Mammary epithelial cell (primary cell): ENCODE measurements at regions of chr11 and their contacts with region 1.

Region 1: DNA sequence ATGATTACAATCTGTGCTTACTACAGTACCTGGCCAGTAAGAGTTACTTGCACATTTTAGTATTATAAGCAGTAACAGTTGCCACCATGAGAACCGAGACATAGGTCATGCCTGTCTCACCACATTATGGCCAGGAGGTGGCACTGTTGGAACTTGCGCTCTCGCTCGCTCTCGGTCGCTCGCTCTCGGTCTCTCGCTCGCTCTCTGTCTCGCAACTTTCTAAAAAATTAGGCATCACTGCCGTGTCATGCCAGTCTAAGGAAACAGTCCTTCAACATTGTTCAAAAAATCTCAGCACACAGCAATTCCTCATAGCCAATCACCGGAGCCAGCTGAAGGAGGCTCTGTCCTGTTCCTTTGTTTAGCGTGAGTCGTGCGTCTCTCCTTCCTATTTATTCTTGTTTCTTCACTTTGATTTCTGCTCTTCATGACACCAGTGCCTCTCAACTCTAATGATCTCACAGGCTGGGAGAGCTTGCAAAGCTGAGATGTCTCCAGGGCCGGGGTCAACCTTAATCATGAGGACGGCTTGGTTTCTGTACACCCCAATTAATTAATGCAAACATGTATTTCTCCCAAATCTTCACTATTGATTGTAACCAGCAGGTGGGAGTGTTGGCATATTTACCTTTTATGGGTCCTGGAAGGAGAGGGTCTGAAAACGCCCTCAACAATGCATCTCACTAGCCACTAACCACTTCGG is 6.3 kb upstream of the ADAMTS8 start:
- DNase-seq: peak; percentile 73
- H3K4me3 ChIP-seq: peak overlapping the region; percentile 67 to 69 (median 68)
- H3K27ac ChIP-seq: peak overlapping the region; percentile 72
- H3K4me1 ChIP-seq: peaks cover 27% of the 10 kb centered on the region
- H3K27me3 ChIP-seq: peaks cover 5% of the 10 kb centered on the region
- CTCF ChIP-seq: peak; percentile 89 to 91

Region 2: DNA sequence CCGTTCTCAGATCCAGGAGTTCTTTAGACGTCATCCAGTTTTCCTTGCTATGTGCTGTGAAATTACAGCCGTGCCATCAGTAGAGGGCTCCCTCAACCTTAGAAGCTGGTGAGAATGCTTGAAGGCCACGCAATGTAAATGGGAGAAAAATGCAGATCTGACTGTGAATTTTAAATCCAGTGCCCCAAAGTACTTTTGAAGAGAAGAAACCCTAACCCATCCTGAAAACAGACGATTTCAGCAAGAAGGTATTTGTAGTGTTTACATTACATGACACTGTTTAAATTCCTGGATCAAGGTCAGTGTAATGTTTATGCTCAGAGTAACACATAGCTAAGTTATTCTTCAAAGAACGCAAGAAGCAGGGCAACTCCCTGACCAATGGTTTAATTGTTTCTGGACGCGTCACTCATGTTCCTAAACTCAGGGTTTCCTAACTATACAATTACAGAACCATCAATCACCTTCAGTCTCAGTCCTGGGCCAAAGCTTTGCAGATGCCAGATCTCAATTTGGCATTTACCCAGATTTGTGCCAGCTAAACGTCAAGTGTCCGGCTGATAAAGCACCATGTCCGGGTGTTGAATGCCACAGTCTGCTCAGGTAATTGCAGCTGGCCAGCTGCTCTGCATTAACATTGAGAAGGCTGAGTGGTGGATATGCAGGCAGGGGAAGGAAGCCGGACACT is 44.5 kb before region 1 on chr11:
- CTCF ChIA-PET with region 1: no interaction called
- dilution Hi-C with region 1: no loop called
- in situ Hi-C with region 1: no loop called
- intact Hi-C with region 1: loop called (anchors 1 kb)
- DNase-seq: peak; percentile 48
- H3K4me3 ChIP-seq: no peak overlapping the region
- H3K27ac ChIP-seq: no peak overlapping the region
- H3K4me1 ChIP-seq: no peaks in the 10 kb centered on the region
- H3K27me3 ChIP-seq: peaks cover 6% of the 10 kb centered on the region
- CTCF ChIP-seq: peak; percentile 21 to 71

Region 3: DNA sequence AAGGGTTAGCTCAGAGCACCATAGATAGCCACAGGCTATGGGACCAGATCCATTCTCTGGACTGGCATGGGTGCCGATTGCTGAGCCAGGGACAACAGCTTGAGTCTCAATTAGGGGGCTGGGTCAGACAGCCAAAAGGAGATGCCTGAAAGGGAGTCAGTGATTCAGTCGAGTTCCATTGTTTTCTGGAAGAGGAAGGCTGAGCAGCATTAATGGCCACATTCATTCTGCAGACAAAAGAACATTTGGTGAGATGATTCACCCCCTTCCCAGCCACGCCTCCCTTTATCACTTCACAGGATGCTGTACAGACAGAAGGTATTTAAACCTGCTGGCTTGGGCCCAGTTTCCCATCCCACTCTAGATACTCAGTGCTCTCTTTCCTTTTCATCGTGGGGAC is 145.7 kb after region 1 on chr11:
- CTCF ChIA-PET with region 1: no interaction called
- dilution Hi-C with region 1: no loop called
- in situ Hi-C with region 1: no loop called
- intact Hi-C with region 1: loop called (anchors 2 kb)
- DNase-seq: peak; percentile 98
- H3K4me3 ChIP-seq: no peak overlapping the region
- H3K27ac ChIP-seq: peak overlapping the region; percentile 96
- H3K4me1 ChIP-seq: peaks cover 38% of the 10 kb centered on the region
- H3K27me3 ChIP-seq: no peaks in the 10 kb centered on the region
- CTCF ChIP-seq: no peak

Region 4: GRCh38 chr11:130677486-130678153 is 242.9 kb after region 1 on chr11:
- CTCF ChIA-PET with region 1: no interaction called
- dilution Hi-C with region 1: no loop called
- in situ Hi-C with region 1: no loop called
- intact Hi-C with region 1: loop called (anchors 5 kb)
- DNase-seq: peak; percentile 83
- H3K4me3 ChIP-seq: peak overlapping the region in 1 of 3 experiments; percentile 9
- H3K27ac ChIP-seq: peak overlapping the region; percentile 75
- H3K4me1 ChIP-seq: peaks cover 29% of the 10 kb centered on the region
- H3K27me3 ChIP-seq: no peaks in the 10 kb centered on the region
- CTCF ChIP-seq: no peak

Region 5: DNA sequence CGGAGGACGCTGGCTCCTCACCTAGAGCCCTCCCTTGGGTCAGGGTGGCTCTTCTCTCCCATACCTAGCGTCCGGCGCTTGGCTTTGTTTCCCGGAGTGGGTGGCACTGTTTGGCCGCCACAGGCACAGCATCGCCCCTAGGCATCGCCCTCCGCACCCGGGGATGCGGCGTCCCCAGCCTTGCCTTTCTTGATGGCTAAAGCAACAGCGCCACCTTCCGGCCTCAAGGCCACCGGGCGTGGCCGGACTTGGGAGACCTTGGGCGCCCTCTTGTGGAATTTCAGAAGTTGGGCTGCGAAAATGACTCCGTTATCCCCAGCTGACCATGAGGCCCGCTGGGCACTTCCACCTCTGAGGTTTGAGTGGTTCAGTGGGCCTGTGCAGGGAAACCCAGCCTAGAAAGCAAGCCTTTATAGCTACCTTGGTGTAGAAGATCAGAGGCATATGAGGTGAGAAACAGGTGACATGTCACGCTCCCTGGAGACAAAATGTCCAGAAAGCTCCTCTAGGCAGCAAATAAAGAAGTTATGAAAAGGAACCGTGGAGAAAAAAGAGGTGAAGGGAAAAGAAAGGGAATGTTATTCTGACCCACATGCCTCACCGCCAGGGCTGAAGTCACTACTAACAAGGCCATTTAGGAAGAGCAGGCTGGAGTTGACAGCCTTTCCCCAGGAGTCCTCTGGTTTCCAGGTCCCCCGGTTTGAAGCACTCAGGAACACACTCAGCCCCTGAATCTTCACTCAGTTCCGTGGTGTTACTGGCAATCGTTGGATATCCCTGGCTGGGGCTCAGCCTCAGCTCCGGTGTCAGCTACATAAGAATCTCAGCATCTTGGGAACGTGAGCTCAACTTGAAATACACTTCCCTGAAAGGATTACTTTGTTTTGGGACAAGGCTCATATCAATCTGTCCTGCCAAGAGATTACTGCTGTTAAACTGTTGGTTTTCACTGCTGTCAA is 427.5 kb after region 1 on chr11:
- CTCF ChIA-PET with region 1: interaction called, 12 read pairs
- dilution Hi-C with region 1: loop called (anchors 5 kb)
- in situ Hi-C with region 1: loop called (anchors 5 to 10 kb)
- intact Hi-C with region 1: loop called (anchors 1 kb)
- DNase-seq: peak; percentile 70
- H3K4me3 ChIP-seq: peak overlapping the region in 1 of 3 experiments; percentile 23
- H3K27ac ChIP-seq: no peak overlapping the region
- H3K4me1 ChIP-seq: peaks cover 3% of the 10 kb centered on the region
- H3K27me3 ChIP-seq: no peaks in the 10 kb centered on the region
- CTCF ChIP-seq: peak; percentile 98 to 100

Region 6: GRCh38 chr11:130904380-130904779 is 469.7 kb after region 1 on chr11:
- CTCF ChIA-PET with region 1: no interaction called
- dilution Hi-C with region 1: no loop called
- in situ Hi-C with region 1: loop called in 1 of 2 experiments (anchors 10 kb)
- intact Hi-C with region 1: loop called (anchors 1 kb)
- DNase-seq: no peak
- H3K4me3 ChIP-seq: no peak overlapping the region
- H3K27ac ChIP-seq: no peak overlapping the region
- H3K4me1 ChIP-seq: peaks cover 12% of the 10 kb centered on the region
- H3K27me3 ChIP-seq: no peaks in the 10 kb centered on the region
- CTCF ChIP-seq: peak; percentile 46 to 56

Region 7: DNA sequence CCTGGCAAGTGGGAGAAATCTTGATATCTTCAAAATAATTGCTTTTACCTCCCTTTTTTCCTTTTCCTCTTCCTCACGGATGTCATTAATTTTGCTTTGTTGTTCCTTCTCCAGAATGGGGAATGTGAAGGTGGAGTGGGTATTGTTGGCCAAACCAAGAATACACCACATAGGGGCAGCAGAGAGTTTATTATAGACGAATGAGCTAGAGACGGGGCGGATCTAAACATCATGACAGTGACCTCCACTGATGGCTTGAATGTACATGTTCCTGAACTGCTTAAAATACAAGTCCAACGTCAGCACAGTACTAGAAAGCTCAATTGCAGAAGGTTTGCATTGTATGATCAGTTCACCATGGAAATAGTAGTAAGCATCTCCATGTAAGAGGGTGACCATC is 603.9 kb after region 1 on chr11:
- CTCF ChIA-PET with region 1: no interaction called
- dilution Hi-C with region 1: no loop called
- in situ Hi-C with region 1: no loop called
- intact Hi-C with region 1: loop called (anchors 1 kb)
- DNase-seq: peak; percentile 32
- H3K4me3 ChIP-seq: no peak overlapping the region
- H3K27ac ChIP-seq: no peak overlapping the region
- H3K4me1 ChIP-seq: peaks cover 22% of the 10 kb centered on the region
- H3K27me3 ChIP-seq: no peaks in the 10 kb centered on the region
- CTCF ChIP-seq: peak; percentile 35 to 49